ENCODE measurements at regions of chr16 and their contacts with region 1.

Region 1: GRCh38 chr16:27313422-27314160 is at the start of gene IL4R:
- DNase-seq: peak in 3 of 4 donors; percentile 67 to 95 (median 89)
- ATAC-seq: peak; percentile 78
- H3K4me3 ChIP-seq: peak within 1 kb of the TSS; percentile 81 to 95
- H3K27ac ChIP-seq: peak within 1 kb of the TSS; percentile 98 to 100
- H3K4me1 ChIP-seq: peaks cover 36 to 53% of the 10 kb centered on the region in 2 donors
- H3K27me3 ChIP-seq: no peaks in the 10 kb centered on the region
- CTCF ChIP-seq: no peak
- polyA plus RNA-seq, gene IL4R: 29.4 to 44.2 (median 35.3) TPM

Region 2: GRCh38 chr16:27242868-27243590 is 70.6 kb before region 1 on chr16:
- intact Hi-C with region 1: loop called in 1 of 2 experiments (anchors 10 kb)
- DNase-seq: peak in 2 of 4 donors; percentile 49 to 77
- ATAC-seq: peak; percentile 53
- H3K4me3 ChIP-seq: peak overlapping the region in 1 of 2 donors; percentile 20
- H3K27ac ChIP-seq: peak overlapping the region; percentile 59 to 89
- H3K4me1 ChIP-seq: peaks cover 22 to 94% of the 10 kb centered on the region in 2 donors
- H3K27me3 ChIP-seq: no peaks in the 10 kb centered on the region
- CTCF ChIP-seq: no peak

Region 3: GRCh38 chr16:27374804-27375425 is 61.3 kb after region 1 on chr16:
- intact Hi-C with region 1: no loop called
- DNase-seq: peak in 3 of 4 donors; percentile 36 to 81 (median 57)
- ATAC-seq: peak; percentile 81
- H3K4me3 ChIP-seq: peak overlapping the region in 1 of 2 donors; percentile 3
- H3K27ac ChIP-seq: peak overlapping the region; percentile 53 to 59
- H3K4me1 ChIP-seq: peaks cover 0 to 28% of the 10 kb centered on the region in 2 donors
- H3K27me3 ChIP-seq: no peaks in the 10 kb centered on the region
- CTCF ChIP-seq: peak; percentile 28 to 60

Region 4: GRCh38 chr16:28011971-28012445 is 698.4 kb after region 1 on chr16:
- intact Hi-C with region 1: no loop called
- DNase-seq: peak in 1 of 4 donors; percentile 4
- ATAC-seq: no peak
- H3K4me3 ChIP-seq: no peak overlapping the region
- H3K27ac ChIP-seq: no peak overlapping the region
- H3K4me1 ChIP-seq: no peaks in the 10 kb centered on the region
- H3K27me3 ChIP-seq: peaks cover 0 to 25% of the 10 kb centered on the region in 2 donors
- CTCF ChIP-seq: no peak